IMR-90 (cell line): ENCODE measurements at regions of chrX and their contacts with region 1.

Region 1: DNA sequence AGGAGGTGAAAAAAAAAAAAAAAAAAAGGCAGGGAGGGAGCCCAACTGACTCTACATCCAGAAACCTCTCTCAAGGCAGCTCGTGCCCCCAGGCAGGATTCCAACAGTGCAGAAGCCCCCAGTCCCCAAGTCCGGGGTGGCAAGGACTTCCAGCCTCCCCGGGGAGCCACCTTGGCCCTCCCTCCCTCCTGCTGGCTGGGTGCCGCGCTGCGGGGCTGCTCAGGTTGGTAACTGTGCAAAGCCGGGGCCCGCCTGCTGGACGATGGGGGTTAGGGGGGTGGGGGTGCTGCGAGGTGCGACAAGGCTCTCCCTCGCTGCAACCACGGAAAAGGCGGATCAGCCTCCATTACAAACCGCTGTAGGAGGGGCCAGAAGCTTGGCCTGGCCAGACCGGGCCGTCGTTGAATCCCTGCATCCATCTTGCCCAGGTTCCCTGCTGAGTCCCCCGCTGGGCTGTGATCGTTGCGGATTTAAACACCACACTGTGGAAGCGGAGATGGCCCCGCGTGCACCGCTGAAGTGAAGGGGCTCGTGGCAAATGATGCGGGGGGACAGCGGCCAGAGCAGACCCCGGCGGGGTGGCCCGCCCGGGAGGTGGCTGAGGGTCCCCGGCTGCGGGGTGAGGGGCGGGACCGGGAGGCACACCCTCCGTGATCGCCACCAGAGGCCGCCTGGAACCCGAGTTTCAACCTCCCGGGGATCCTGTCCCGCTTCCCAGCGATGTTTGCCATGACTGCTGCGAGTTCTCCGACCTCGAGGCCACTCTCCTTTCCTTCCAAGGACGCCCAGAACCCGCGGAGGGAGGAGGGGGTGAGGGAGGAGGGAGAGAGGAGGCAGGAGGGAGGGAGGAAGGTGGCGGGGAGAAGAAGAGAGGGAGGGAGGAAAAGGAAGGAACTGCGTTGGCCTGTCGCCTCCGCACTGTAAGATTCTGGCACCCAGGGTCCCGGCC is 58.0 kb upstream of the DDX3X start:
- DNase-seq: peak; percentile 57
- ATAC-seq: peak; percentile 90
- H3K4me3 ChIP-seq: peak overlapping the region; percentile 57
- H3K27ac ChIP-seq: peak overlapping the region; percentile 57
- H3K4me1 ChIP-seq: peaks cover 2% of the 10 kb centered on the region; the same call in 1 of the 2 replicates
- H3K27me3 ChIP-seq: peaks cover 3% of the 10 kb centered on the region; the same call in 1 of the 2 replicates
- CTCF ChIP-seq: peak; percentile 60
- POLR2A ChIP-seq: no peak
- RAD21 ChIP-seq: peak; percentile 75

Region 2: DNA sequence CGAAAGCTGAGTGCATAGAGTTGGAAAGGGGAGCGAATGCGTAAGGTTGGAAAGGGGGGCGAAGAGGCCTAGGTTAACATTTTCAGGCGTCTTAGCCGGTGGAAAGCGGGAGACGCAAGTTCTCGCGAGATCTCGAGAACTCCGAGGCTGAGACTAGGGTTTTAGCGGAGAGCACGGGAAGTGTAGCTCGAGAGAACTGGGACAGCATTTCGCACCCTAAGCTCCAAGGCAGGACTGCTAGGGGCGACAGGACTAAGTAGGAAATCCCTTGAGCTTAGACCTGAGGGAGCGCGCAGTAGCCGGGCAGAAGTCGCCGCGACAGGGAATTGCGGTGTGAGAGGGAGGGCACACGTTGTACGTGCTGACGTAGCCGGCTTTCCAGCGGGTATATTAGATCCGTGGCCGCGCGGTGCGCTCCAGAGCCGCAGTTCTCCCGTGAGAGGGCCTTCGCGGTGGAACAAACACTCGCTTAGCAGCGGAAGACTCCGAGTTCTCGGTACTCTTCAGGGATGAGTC is 57.9 kb after region 1 on chrX and contains the start of gene DDX3X:
- CTCF ChIA-PET with region 1: no interaction called
- POLR2A ChIA-PET with region 1: no interaction called
- dilution Hi-C with region 1: no loop called
- in situ Hi-C with region 1: no loop called
- intact Hi-C with region 1: loop called (anchors 1 kb)
- DNase-seq: peak; percentile 91
- ATAC-seq: peak; percentile 72
- H3K4me3 ChIP-seq: peak within 1 kb of the TSS; percentile 68
- H3K27ac ChIP-seq: peak within 1 kb of the TSS; percentile 94
- H3K4me1 ChIP-seq: peaks cover 5% of the 10 kb centered on the region; the same call in 1 of the 2 replicates
- H3K27me3 ChIP-seq: no peaks in the 10 kb centered on the region
- CTCF ChIP-seq: peak; percentile 36
- POLR2A ChIP-seq: peak; percentile 100
- RAD21 ChIP-seq: no peak
- total RNA-seq, gene DDX3X: 229 and 448 TPM in 2 replicates

Region 3: DNA sequence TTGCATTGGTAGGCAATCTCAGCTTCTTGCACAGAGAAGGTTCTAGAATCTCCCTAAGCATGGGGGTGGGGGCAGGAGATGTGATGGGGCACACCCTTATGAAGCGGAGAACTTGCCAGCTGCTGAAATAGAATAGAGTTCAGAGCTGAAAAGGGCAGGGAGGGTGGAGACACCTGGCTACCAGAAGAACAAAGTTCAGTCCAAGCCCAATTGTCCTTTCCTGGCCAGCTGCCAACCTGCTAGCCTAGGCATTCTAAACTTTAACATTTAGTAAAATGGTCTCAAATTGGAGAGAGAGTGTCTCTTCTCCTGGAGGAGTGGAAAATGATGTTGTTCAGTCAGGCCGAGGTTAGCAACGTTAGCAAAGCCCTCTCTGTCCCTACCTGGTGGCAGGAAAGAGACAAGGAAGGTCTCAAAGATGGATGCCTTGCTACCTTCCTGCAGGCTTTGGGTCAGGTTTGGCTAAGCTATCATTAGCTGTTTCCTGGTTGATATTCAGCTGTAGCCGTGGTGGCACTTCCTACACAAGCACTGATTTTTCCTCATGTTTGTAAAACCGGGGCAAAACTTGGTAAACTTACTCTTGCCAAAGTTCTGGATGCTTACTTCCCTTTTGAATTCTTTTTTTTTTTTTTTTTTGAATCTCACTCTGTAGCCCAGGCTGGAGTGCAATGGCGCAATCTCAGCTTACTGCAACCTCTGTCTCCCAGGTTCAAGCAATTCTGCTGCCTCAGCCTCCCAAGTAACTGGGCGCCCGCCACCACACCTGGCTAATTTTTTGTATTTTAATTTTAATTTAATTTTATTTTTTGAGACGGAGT is 136.5 kb after region 1 on chrX:
- CTCF ChIA-PET with region 1: no interaction called
- POLR2A ChIA-PET with region 1: no interaction called
- dilution Hi-C with region 1: no loop called
- in situ Hi-C with region 1: no loop called
- intact Hi-C with region 1: no loop called
- DNase-seq: no peak
- ATAC-seq: no peak
- H3K4me3 ChIP-seq: no peak overlapping the region
- H3K27ac ChIP-seq: no peak overlapping the region
- H3K4me1 ChIP-seq: no peaks in the 10 kb centered on the region
- H3K27me3 ChIP-seq: peaks cover 9% of the 10 kb centered on the region
- CTCF ChIP-seq: no peak
- POLR2A ChIP-seq: no peak
- RAD21 ChIP-seq: no peak

Region 4: GRCh38 chrX:41734530-41734929 is 458.6 kb after region 1 on chrX:
- CTCF ChIA-PET with region 1: no interaction called
- POLR2A ChIA-PET with region 1: no interaction called
- dilution Hi-C with region 1: no loop called
- in situ Hi-C with region 1: no loop called
- intact Hi-C with region 1: loop called (anchors 10 kb)
- DNase-seq: peak; percentile 20
- ATAC-seq: peak; percentile 54
- H3K4me3 ChIP-seq: no peak overlapping the region
- H3K27ac ChIP-seq: no peak overlapping the region
- H3K4me1 ChIP-seq: no peaks in the 10 kb centered on the region
- H3K27me3 ChIP-seq: no peaks in the 10 kb centered on the region; the same call in 1 of the 2 replicates
- CTCF ChIP-seq: peak; percentile 43
- POLR2A ChIP-seq: no peak
- RAD21 ChIP-seq: peak; percentile 56

Region 5: GRCh38 chrX:41759817-41760216 is 483.9 kb after region 1 on chrX:
- CTCF ChIA-PET with region 1: no interaction called
- POLR2A ChIA-PET with region 1: no interaction called
- dilution Hi-C with region 1: no loop called
- in situ Hi-C with region 1: loop called (anchors 25 kb)
- intact Hi-C with region 1: no loop called
- DNase-seq: peak; percentile 54
- ATAC-seq: no peak
- H3K4me3 ChIP-seq: no peak overlapping the region
- H3K27ac ChIP-seq: no peak overlapping the region
- H3K4me1 ChIP-seq: no peaks in the 10 kb centered on the region
- H3K27me3 ChIP-seq: peaks cover 1% of the 10 kb centered on the region; the same call in 1 of the 2 replicates
- CTCF ChIP-seq: peak; percentile 57
- POLR2A ChIP-seq: no peak
- RAD21 ChIP-seq: peak; percentile 59

Region 6: GRCh38 chrX:41906515-41907165 is 630.7 kb after region 1 on chrX:
- CTCF ChIA-PET with region 1: no interaction called
- POLR2A ChIA-PET with region 1: no interaction called
- dilution Hi-C with region 1: no loop called
- in situ Hi-C with region 1: no loop called
- intact Hi-C with region 1: no loop called
- DNase-seq: no peak
- ATAC-seq: no peak
- H3K4me3 ChIP-seq: no peak overlapping the region
- H3K27ac ChIP-seq: no peak overlapping the region
- H3K4me1 ChIP-seq: no peaks in the 10 kb centered on the region
- H3K27me3 ChIP-seq: no peaks in the 10 kb centered on the region; the same call in 1 of the 2 replicates
- CTCF ChIP-seq: no peak
- POLR2A ChIP-seq: no peak
- RAD21 ChIP-seq: no peak